ENCODE measurements at regions of chr3 and their contacts with region 1.

Region 1: GRCh38 chr3:56801662-56802377 is at the start of gene ARHGEF3:
- DNase-seq: peak; percentile 43
- ATAC-seq: peak; percentile 99
- H3K4me3 ChIP-seq: peak within 1 kb of the TSS; percentile 58 to 70
- H3K27ac ChIP-seq: peak within 1 kb of the TSS; percentile 65
- H3K4me1 ChIP-seq: peaks cover 9% of the 10 kb centered on the region
- H3K27me3 ChIP-seq: no peaks in the 10 kb centered on the region
- CTCF ChIP-seq: peak; percentile 78
- total RNA-seq, gene ARHGEF3: 19.8 TPM

Region 2: DNA sequence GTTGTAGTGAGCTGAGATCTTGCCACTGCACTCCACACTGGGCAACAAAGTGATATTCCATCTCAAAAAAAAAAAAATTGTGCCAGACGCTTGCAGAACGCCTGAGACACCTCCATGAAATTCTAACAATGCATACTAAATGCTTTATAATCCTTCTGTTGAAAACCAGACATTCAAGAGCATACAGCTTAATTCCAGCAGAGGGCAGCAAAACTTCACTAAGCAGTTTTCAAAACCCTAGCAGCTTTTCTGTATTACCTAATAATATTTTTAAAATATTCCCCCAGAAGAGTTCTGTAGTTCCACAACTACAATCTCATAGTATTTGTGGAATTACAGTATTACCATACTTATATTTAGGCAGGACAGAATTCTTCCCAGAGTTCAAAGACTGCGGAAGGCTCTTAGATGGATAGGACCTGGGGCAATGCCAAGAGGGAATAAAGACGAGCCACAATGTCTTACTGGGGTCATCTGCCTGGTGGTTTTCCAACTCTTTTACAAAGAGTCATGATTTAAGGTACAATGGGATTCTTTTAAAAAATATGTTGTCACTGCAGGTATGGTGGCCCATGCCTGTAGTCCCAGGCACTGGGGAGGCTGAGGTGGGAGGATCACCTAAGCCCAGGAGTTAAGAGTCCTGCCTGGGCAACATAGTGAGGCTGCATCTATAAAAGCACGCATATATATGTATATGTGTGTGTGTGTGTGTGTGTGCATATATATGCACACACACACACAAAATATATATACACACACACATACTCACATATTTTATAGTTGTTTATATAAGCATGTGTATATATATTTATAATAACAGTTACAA is 99.1 kb before region 1 on chr3:
- CTCF ChIA-PET with region 1: interaction called, 22 read pairs
- POLR2A ChIA-PET with region 1: interaction called, 7 read pairs
- in situ Hi-C with region 1: no loop called
- intact Hi-C with region 1: loop called (anchors 2 kb)
- DNase-seq: no peak
- ATAC-seq: peak; percentile 84
- H3K4me3 ChIP-seq: no peak overlapping the region
- H3K27ac ChIP-seq: no peak overlapping the region
- H3K4me1 ChIP-seq: no peaks in the 10 kb centered on the region
- H3K27me3 ChIP-seq: no peaks in the 10 kb centered on the region
- CTCF ChIP-seq: peak; percentile 75

Measured in Panc1 (cell line).